ENCODE measurements at regions of chr13 and their contacts with region 1.

Region 1: GRCh38 chr13:48975856-48976575 is at the start of gene FNDC3A:
- DNase-seq: peak; percentile 85
- H3K4me3 ChIP-seq: peak within 1 kb of the TSS; percentile 43 to 77 (median 76)
- H3K27ac ChIP-seq: peak within 1 kb of the TSS; percentile 97 to 99 (median 97)
- H3K4me1 ChIP-seq: peaks cover 12 to 20% of the 10 kb centered on the region in 2 donors
- H3K27me3 ChIP-seq: no peaks in the 10 kb centered on the region
- CTCF ChIP-seq: peak in 1 of 6 experiments; percentile 4
- POLR2A ChIP-seq: peak; percentile 25 to 86
- total RNA-seq, gene FNDC3A: 90.3 to 125 (median 111) TPM

Region 2: GRCh38 chr13:48542581-48543341 is 433.3 kb before region 1 on chr13:
- intact Hi-C with region 1: no loop called
- DNase-seq: peak; percentile 90 to 92
- H3K4me3 ChIP-seq: peak overlapping the region in 1 of 3 donors; percentile 5
- H3K27ac ChIP-seq: peak overlapping the region; percentile 76 to 84 (median 82)
- H3K4me1 ChIP-seq: peaks cover 14 to 18% of the 10 kb centered on the region in 2 donors
- H3K27me3 ChIP-seq: no peaks in the 10 kb centered on the region
- CTCF ChIP-seq: no peak
- POLR2A ChIP-seq: peak in 1 of 2 donors; percentile 40

Region 3: GRCh38 chr13:49279885-49280284 is 303.9 kb after region 1 on chr13:
- intact Hi-C with region 1: loop called (anchors 5 kb)
- DNase-seq: no peak
- H3K4me3 ChIP-seq: no peak overlapping the region
- H3K27ac ChIP-seq: peak overlapping the region in 1 of 3 donors; percentile 58
- H3K4me1 ChIP-seq: peaks cover 0 to 4% of the 10 kb centered on the region in 2 donors
- H3K27me3 ChIP-seq: no peaks in the 10 kb centered on the region
- CTCF ChIP-seq: no peak
- POLR2A ChIP-seq: no peak

Region 4: DNA sequence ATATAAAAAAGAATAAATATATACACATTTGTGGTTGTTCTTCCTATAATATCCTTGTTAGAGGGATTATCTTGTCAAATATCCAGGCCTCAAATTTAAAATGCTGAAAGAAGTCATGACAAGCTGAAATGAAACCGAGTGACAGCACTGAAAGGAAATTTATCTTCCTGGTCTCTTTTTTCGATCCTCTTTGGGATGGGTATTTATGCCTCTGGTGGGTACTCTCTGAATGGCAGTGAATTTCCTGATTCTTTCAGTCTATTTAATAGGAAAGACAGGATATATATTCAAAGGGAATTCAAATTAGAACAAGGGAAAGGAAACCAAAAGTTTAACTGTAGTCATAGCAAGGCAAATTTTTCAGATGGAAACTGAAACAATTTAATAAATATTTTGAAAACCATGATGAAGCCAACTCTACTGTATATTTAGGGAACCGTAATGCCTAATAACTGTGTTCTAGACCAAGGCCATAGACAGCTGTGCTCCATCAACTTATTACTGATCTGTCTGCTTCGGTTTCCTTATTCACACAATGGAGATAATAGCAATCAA is 1769.6 kb after region 1 on chr13:
- intact Hi-C with region 1: no loop called
- DNase-seq: no peak
- H3K4me3 ChIP-seq: no peak overlapping the region
- H3K27ac ChIP-seq: no peak overlapping the region
- H3K4me1 ChIP-seq: no peaks in the 10 kb centered on the region
- H3K27me3 ChIP-seq: no peaks in the 10 kb centered on the region
- CTCF ChIP-seq: no peak
- POLR2A ChIP-seq: no peak